SK-MEL-5 (cell line): ENCODE measurements at regions of chr15 and their contacts with region 1.

Region 1: DNA sequence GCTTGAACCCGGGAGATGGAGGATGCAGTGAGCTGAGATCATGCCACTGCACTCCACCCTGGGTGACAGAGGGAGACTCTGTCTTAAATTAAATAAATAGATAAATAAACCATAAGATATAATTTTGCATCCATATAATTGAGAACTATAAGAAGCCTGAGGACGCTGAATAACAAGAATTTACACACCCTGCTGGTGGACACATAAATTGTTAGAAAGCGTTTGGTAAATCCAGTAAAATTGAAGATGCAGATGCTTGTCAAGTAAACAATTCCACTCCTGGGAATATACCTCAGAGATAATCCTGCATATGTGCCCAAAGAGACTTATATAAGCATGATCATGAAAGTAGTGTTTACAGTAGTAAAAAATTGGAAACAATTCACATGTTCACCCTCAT is 41.7 kb downstream of the TTC23 start:
- DNase-seq: peak; percentile 6

Region 2: GRCh38 chr15:99104788-99105513 is 102.7 kb before region 1 on chr15 and contains the start of gene SYNM:
- in situ Hi-C with region 1: loop called (anchors 10 kb)
- DNase-seq: peak; percentile 78
- total RNA-seq, gene SYNM: 20.3 and 25.9 TPM in 2 replicates